OCI-LY7 (cell line): ENCODE measurements at regions of chr2 and their contacts with region 1.

Region 1: DNA sequence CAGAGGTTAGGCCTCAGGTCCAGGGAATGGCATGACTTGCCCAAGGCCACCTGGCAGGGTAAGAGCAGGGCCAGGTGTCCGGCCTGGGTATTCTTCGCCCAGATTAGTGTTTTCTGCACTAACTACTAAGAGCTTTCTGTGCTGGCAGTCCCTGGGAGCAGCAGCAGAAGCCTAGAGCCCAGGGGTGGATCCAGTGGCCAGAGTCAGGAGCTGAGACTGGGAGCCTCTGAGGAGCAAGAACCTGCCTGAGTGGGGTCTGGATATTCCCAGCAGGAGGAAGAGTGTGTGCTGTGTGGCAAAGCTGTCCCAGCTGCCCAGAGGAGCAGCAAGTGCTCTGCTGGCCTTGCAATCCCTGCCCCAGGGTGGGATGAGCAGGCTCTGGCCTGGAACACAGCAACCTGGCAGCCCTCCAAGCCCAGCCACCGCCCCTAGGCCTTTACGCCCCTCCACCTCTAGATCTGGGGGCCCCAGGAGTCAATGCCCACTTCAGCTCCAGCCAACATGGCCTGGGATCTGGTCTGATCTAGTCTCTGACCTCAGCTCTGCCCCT is 30.7 kb upstream of the GPAT2 start:
- DNase-seq: no peak
- H3K4me3 ChIP-seq: no peak overlapping the region
- H3K27ac ChIP-seq: no peak overlapping the region
- H3K4me1 ChIP-seq: no peaks in the 10 kb centered on the region
- CTCF ChIP-seq: no peak

Region 2: DNA sequence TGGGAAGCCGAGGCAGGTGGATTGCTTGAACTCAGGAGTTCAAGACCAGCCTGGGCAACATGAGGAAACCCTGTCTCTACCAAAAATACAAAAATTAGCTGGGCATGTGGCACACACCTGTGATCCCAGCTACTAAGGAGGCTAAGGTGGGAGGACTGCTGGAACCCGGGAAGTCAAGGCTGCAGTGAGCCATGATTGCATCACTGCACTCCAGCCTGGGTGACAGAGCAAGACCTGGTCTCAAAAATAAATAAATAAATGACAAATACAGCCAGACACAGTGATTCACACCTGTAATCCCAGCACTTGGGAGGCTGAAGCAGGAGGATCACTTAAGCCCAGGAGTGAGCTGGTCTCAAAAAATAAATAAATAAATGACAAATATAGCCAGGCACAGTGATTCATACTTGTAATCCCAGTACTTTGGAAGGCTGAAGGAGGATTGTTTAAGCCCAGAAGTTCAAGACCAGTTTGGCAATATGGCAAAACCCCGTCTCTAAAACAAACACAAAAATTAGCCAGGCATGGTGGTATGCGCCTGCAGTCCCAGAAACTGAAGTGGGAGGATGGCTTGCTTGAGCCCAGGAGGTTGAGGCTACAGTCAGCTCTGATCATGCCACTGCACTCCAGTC is 566.5 kb after region 1 on chr2:
- CTCF ChIA-PET with region 1: no interaction called
- POLR2A ChIA-PET with region 1: interaction called, 10 read pairs
- intact Hi-C with region 1: no loop called
- DNase-seq: no peak
- H3K4me3 ChIP-seq: no peak overlapping the region
- H3K27ac ChIP-seq: no peak overlapping the region
- H3K4me1 ChIP-seq: peaks cover 22% of the 10 kb centered on the region
- CTCF ChIP-seq: no peak